B cell (primary cell): ENCODE measurements at regions of chr6 and their contacts with region 1.

Region 1: GRCh38 chr6:25017932-25018567 is 82.3 kb upstream of the RIPOR2 start:
- DNase-seq: peak; percentile 87
- ATAC-seq: peak; percentile 79
- H3K4me3 ChIP-seq: no peak overlapping the region
- H3K4me3 Mint-ChIP-seq: peak overlapping the region; percentile 48
- H3K27ac ChIP-seq: peak overlapping the region; percentile 46 to 86
- H3K27ac Mint-ChIP-seq: peak overlapping the region; percentile 72
- H3K4me1 ChIP-seq: peaks cover 42 to 49% of the 10 kb centered on the region in 2 donors
- H3K4me1 Mint-ChIP-seq: peaks cover 44% of the 10 kb centered on the region
- H3K27me3 ChIP-seq: no peaks in the 10 kb centered on the region
- H3K27me3 Mint-ChIP-seq: no peaks in the 10 kb centered on the region
- CTCF ChIP-seq: peak; percentile 87

Region 2: DNA sequence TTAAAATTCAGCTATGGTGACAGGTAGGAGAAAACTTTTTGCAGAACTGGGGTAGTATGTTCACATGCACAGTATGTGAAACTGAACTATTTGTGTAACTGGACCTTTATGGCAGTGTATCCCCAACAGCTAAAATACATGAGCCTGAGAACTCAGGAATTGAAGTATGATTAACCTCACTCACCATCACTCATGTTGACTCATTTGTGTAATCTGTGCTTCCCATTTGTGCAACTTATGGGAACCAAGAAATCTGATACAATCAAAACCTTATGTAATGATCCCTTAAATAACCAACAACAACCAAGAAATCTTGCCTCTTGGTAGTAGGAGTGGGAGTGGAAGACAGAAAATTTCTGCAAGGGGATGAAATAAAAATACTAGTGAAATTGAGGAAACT is 1773.8 kb before region 1 on chr6:
- CTCF ChIA-PET with region 1: no interaction called
- POLR2A ChIA-PET with region 1: no interaction called
- intact Hi-C with region 1: no loop called
- DNase-seq: no peak
- ATAC-seq: no peak
- H3K4me3 ChIP-seq: no peak overlapping the region
- H3K4me3 Mint-ChIP-seq: no peak overlapping the region
- H3K27ac ChIP-seq: no peak overlapping the region
- H3K27ac Mint-ChIP-seq: no peak overlapping the region
- H3K4me1 ChIP-seq: no peaks in the 10 kb centered on the region
- H3K4me1 Mint-ChIP-seq: no peaks in the 10 kb centered on the region
- H3K27me3 ChIP-seq: no peaks in the 10 kb centered on the region
- H3K27me3 Mint-ChIP-seq: no peaks in the 10 kb centered on the region
- CTCF ChIP-seq: no peak

Region 3: DNA sequence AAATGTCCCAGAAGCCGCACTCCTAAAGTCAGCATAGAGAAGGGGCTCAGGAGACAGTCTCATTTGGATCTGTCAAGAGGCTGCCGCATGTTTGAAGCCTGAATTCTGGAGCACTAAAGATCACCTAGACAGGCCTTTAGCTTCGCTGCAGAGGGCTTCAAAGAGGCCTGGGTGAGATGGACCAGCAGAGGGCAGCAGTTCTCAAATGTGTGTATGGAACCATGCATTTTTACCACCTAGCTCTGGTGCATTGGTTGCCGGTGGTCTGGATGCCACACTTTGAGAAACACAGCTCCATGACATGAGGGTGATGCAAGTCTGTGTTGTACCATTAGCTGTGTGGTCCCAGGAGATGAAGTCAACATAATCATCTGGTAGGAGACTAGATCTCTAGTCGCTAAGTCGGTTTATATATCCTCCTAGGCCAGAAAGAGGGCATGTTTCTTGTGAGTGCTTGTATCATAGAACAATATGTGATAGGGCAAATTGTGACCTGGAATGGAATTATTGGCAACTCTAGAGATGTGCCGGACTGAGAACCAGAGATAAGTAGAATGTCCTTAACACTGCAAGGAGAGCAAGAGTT is 436.9 kb before region 1 on chr6:
- CTCF ChIA-PET with region 1: interaction called, 5 read pairs
- POLR2A ChIA-PET with region 1: no interaction called
- intact Hi-C with region 1: loop called (anchors 1 kb)
- DNase-seq: peak; percentile 81
- ATAC-seq: peak; percentile 87
- H3K4me3 ChIP-seq: no peak overlapping the region
- H3K4me3 Mint-ChIP-seq: no peak overlapping the region
- H3K27ac ChIP-seq: no peak overlapping the region
- H3K27ac Mint-ChIP-seq: no peak overlapping the region
- H3K4me1 ChIP-seq: peaks cover 3 to 5% of the 10 kb centered on the region in 2 donors
- H3K4me1 Mint-ChIP-seq: peaks cover 4% of the 10 kb centered on the region
- H3K27me3 ChIP-seq: no peaks in the 10 kb centered on the region
- H3K27me3 Mint-ChIP-seq: no peaks in the 10 kb centered on the region
- CTCF ChIP-seq: peak; percentile 86

Region 4: GRCh38 chr6:24683297-24684296 is 334.5 kb before region 1 on chr6:
- CTCF ChIA-PET with region 1: no interaction called
- POLR2A ChIA-PET with region 1: no interaction called
- intact Hi-C with region 1: no loop called
- DNase-seq: no peak
- ATAC-seq: no peak
- H3K4me3 ChIP-seq: no peak overlapping the region
- H3K4me3 Mint-ChIP-seq: no peak overlapping the region
- H3K27ac ChIP-seq: no peak overlapping the region
- H3K27ac Mint-ChIP-seq: no peak overlapping the region
- H3K4me1 ChIP-seq: peaks cover 0 to 4% of the 10 kb centered on the region in 2 donors
- H3K4me1 Mint-ChIP-seq: peaks cover 2% of the 10 kb centered on the region
- H3K27me3 ChIP-seq: no peaks in the 10 kb centered on the region
- H3K27me3 Mint-ChIP-seq: no peaks in the 10 kb centered on the region
- CTCF ChIP-seq: no peak

Region 5: GRCh38 chr6:24848461-24848860 is 169.6 kb before region 1 on chr6:
- CTCF ChIA-PET with region 1: interaction called, 216 read pairs
- POLR2A ChIA-PET with region 1: no interaction called
- intact Hi-C with region 1: no loop called
- DNase-seq: no peak
- ATAC-seq: no peak
- H3K4me3 ChIP-seq: no peak overlapping the region
- H3K4me3 Mint-ChIP-seq: no peak overlapping the region
- H3K27ac ChIP-seq: no peak overlapping the region
- H3K27ac Mint-ChIP-seq: peak overlapping the region; percentile 18
- H3K4me1 ChIP-seq: no peaks in the 10 kb centered on the region
- H3K4me1 Mint-ChIP-seq: peaks cover 12% of the 10 kb centered on the region
- H3K27me3 ChIP-seq: no peaks in the 10 kb centered on the region
- H3K27me3 Mint-ChIP-seq: no peaks in the 10 kb centered on the region
- CTCF ChIP-seq: no peak

Region 6: DNA sequence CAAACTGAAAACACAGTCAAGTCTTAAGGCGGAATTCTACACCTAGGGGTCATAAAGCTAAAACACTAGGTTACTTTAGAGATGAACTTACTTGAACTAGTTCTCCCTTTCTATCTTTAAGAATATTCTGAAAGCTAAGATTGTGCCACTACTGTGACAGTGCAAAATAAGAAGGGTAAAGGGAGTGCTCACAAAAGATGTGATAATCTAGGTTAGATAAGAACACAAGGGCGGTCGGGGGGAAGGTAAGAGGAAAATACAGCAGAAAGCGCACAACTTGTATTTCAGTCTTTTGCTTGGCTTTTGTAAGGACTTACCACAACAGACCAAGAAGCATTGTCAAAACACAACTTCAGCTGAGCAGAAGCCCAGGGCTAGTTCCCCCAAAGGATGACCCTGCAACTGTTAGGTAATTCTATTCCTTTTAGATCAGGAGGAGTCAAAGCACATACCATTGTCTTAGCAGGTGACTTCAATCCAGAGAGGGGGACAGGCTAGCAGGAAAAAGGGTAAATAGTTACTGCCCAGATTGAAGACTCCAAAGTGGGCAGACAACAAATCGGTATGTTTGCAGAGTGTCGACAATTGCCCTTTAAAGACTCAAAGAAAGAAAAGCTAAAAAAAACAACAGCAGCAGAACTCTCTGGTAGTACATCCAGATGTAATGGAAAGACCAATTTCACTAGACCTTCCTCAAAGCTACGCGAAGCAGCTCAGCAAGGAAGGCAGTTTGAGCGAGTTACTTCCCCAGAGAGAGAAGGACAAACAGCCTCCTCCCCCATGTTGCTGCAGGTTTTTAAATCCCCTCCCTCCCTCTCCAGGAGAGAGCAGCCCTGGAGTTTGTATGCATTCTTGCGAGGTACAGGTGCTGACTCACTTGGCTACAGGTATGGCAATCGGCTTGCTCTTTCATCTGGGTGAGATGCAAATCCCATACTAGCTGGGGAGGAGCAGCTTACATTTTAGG is 141.3 kb before region 1 on chr6:
- CTCF ChIA-PET with region 1: interaction called, 17 read pairs
- POLR2A ChIA-PET with region 1: no interaction called
- intact Hi-C with region 1: no loop called
- DNase-seq: no peak
- ATAC-seq: no peak
- H3K4me3 ChIP-seq: no peak overlapping the region
- H3K4me3 Mint-ChIP-seq: no peak overlapping the region
- H3K27ac ChIP-seq: peak overlapping the region in 1 of 2 donors; percentile 70
- H3K27ac Mint-ChIP-seq: peak overlapping the region; percentile 23
- H3K4me1 ChIP-seq: peaks cover 28 to 29% of the 10 kb centered on the region in 2 donors
- H3K4me1 Mint-ChIP-seq: peaks cover 64% of the 10 kb centered on the region
- H3K27me3 ChIP-seq: no peaks in the 10 kb centered on the region
- H3K27me3 Mint-ChIP-seq: no peaks in the 10 kb centered on the region
- CTCF ChIP-seq: no peak

Region 7: DNA sequence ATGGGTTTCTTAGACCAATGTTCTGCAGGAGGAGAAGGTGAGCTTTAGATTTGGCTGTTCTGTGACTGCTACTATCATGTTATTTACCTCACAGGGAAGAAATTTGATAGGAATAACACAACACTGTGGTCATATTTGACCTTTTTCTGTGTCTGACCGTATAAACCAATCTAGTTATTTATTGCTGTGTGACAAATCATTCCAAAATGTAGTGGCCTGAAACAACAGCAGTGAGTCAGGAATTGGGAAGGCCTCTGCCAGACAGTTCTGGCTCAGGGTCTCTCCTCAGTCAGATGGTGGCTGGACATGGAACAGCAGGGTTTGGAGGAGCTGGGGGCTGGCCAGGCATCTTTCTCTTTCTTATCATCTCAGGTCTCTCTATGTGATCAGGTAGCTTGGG is 115.3 kb before region 1 on chr6:
- CTCF ChIA-PET with region 1: interaction called, 80 read pairs
- POLR2A ChIA-PET with region 1: no interaction called
- intact Hi-C with region 1: no loop called
- DNase-seq: no peak
- ATAC-seq: no peak
- H3K4me3 ChIP-seq: no peak overlapping the region
- H3K4me3 Mint-ChIP-seq: peak overlapping the region; percentile 13
- H3K27ac ChIP-seq: peak overlapping the region; percentile 3 to 93
- H3K27ac Mint-ChIP-seq: peak overlapping the region; percentile 85
- H3K4me1 ChIP-seq: peaks cover 88 to 91% of the 10 kb centered on the region in 2 donors
- H3K4me1 Mint-ChIP-seq: peaks cover 88% of the 10 kb centered on the region
- H3K27me3 ChIP-seq: no peaks in the 10 kb centered on the region
- H3K27me3 Mint-ChIP-seq: no peaks in the 10 kb centered on the region
- CTCF ChIP-seq: no peak

Region 8: DNA sequence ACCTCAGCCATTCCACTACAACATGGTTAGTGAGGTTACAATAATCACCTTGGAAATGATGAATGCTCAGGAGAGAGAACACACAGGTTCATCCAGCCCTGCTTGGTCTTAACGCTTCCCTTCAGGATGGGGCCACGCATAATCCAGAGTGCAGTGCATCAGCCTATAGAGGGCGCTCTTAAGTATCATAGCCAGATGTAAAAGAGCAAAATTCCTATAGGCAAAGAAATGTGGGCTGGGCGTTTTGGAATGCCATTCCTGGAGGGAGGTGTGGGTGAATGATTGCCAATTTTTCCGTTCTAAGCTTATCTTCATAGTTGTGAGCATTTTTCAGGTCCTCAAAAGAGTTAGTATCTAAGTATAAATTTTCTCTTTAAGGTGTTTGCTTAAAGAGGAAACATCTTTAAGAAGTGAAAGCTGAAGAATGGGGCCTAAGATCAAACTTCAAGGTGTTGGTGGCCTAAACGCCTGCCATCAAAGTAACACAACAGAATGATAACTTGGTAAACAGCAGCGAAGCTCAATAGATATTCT is 84.1 kb before region 1 on chr6:
- CTCF ChIA-PET with region 1: interaction called, 129 read pairs
- POLR2A ChIA-PET with region 1: interaction called, 16 read pairs
- intact Hi-C with region 1: loop called (anchors 1 kb)
- DNase-seq: peak; percentile 83
- ATAC-seq: peak; percentile 9
- H3K4me3 ChIP-seq: peak overlapping the region; percentile 72 to 100 (median 86)
- H3K4me3 Mint-ChIP-seq: peak overlapping the region; percentile 95
- H3K27ac ChIP-seq: peak overlapping the region; percentile 74 to 93
- H3K27ac Mint-ChIP-seq: peak overlapping the region; percentile 90
- H3K4me1 ChIP-seq: peaks cover 54% of the 10 kb centered on the region in 2 donors
- H3K4me1 Mint-ChIP-seq: peaks cover 68% of the 10 kb centered on the region
- H3K27me3 ChIP-seq: no peaks in the 10 kb centered on the region
- H3K27me3 Mint-ChIP-seq: no peaks in the 10 kb centered on the region
- CTCF ChIP-seq: peak; percentile 89

Region 9: GRCh38 chr6:25035527-25036435 is 17.7 kb after region 1 on chr6:
- CTCF ChIA-PET with region 1: interaction called, 92 read pairs
- POLR2A ChIA-PET with region 1: interaction called, 3 read pairs
- intact Hi-C with region 1: no loop called
- DNase-seq: peak; percentile 50
- ATAC-seq: peak; percentile 57
- H3K4me3 ChIP-seq: peak overlapping the region in 4 of 5 experiments; percentile 28 to 65 (median 50)
- H3K4me3 Mint-ChIP-seq: peak overlapping the region; percentile 89
- H3K27ac ChIP-seq: peak overlapping the region; percentile 76 to 78
- H3K27ac Mint-ChIP-seq: peak overlapping the region; percentile 91
- H3K4me1 ChIP-seq: peaks cover 53 to 63% of the 10 kb centered on the region in 2 donors
- H3K4me1 Mint-ChIP-seq: peaks cover 66% of the 10 kb centered on the region
- H3K27me3 ChIP-seq: no peaks in the 10 kb centered on the region
- H3K27me3 Mint-ChIP-seq: no peaks in the 10 kb centered on the region
- CTCF ChIP-seq: no peak

Region 10: DNA sequence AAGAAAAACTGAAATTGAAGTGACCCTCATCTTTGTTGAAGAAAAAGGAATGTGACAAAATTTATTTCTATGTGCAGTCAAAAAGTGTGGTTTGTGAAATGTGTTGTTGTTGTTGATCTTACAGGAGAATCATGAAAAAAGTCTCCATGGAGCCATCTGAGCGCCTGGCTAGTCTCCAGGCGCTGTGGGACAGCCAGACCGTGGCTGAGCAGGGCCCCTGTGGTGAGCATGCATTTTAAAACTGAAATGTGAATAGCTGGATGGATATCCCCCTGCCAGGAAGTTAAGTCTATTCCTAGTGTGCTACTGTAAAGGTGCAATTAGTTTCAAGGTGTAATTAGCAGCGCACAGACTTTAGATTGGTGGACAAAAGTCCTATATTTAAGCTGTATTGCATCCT is 431.7 kb after region 1 on chr6:
- CTCF ChIA-PET with region 1: no interaction called
- POLR2A ChIA-PET with region 1: no interaction called
- intact Hi-C with region 1: no loop called
- DNase-seq: no peak
- ATAC-seq: no peak
- H3K4me3 ChIP-seq: no peak overlapping the region
- H3K4me3 Mint-ChIP-seq: no peak overlapping the region
- H3K27ac ChIP-seq: no peak overlapping the region
- H3K27ac Mint-ChIP-seq: no peak overlapping the region
- H3K4me1 ChIP-seq: peaks cover 11 to 15% of the 10 kb centered on the region in 2 donors
- H3K4me1 Mint-ChIP-seq: peaks cover 23% of the 10 kb centered on the region
- H3K27me3 ChIP-seq: no peaks in the 10 kb centered on the region
- H3K27me3 Mint-ChIP-seq: no peaks in the 10 kb centered on the region
- CTCF ChIP-seq: no peak